ENCODE measurements at regions of chr10 and their contacts with region 1.

Region 1: DNA sequence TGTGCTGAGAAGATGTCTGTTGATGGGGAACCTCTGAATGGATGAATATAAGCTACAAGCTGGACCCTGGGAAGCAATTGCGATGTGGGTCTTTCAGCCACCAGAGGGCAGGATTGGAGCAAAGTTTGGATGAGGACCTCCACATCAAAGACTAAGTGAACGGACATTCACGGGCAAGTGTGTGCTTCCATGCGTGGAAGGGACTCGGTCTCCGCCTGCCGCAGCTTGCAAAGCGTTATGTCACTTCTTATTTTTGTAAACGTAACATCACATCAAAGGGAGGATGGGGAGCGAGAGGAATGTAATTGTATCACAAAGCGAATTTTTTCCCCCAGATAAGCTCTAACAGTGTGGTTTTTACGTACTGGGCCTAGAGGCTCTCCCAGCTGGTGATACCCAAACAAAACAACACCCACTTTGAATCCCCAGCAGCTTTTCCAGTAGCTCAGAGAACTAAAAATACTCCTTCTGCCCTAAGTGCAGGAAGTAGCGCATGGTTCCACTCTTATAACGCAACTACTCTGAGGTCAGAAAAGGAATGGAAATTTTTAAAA is 65.0 kb downstream of the VWA2 start:
- DNase-seq: peak; percentile 83
- ATAC-seq: peak; percentile 35
- H3K4me3 Mint-ChIP-seq: peak overlapping the region; percentile 74
- H3K27ac Mint-ChIP-seq: no peak overlapping the region
- H3K4me1 Mint-ChIP-seq: peaks cover 5% of the 10 kb centered on the region
- H3K27me3 Mint-ChIP-seq: 0 out of 2 replicates have a peak, but pooled peaks cover 3% of the 10 kb centered on the region
- CTCF ChIP-seq: peak; percentile 76

Region 2: GRCh38 chr10:114315566-114316420 is 11.7 kb after region 1 on chr10:
- CTCF ChIA-PET with region 1: interaction called, 12 read pairs
- POLR2A ChIA-PET with region 1: no interaction called
- DNase-seq: no peak
- ATAC-seq: no peak; the same call in 1 of the 2 replicates
- H3K4me3 Mint-ChIP-seq: no peak overlapping the region
- H3K27ac Mint-ChIP-seq: no peak overlapping the region
- H3K4me1 Mint-ChIP-seq: peaks cover 4% of the 10 kb centered on the region
- H3K27me3 Mint-ChIP-seq: no peaks in the 10 kb centered on the region
- CTCF ChIP-seq: no peak

Region 3: DNA sequence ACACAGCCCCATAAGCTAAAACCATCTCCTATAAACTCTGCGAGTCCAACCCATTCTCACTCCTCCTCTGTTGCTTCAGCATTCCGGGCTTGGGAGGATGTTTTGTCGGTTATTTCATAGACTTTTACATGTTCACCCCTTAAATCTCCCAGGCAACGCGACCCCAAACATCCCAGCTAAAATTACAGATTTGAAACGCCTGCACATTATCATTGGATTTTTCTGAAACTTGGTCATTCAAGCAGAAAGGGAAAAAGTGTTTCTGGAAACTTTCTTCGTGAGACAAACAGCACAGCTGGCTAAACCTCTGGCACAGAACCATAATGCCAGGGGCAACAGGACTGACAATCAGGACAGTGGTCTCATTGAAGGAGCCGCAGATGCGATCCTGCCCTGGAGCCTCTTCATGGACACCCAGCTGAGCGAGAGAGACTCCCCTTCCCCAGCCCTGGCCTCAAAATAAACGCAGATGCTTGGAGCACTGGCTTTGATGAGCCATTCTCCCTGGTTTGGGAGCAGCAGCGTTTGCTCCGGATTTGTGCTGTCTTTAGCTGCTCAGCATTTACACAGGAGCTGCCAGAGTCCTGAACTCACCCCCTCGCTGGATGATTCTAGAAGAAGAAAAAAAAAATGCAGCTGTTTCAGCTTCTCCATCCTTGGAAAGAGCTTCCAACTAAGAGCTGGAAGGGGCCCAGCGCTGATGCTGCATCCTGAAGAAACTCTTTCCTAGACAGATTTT is 70.1 kb after region 1 on chr10:
- CTCF ChIA-PET with region 1: interaction called, 25 read pairs
- POLR2A ChIA-PET with region 1: no interaction called
- DNase-seq: no peak
- ATAC-seq: peak; percentile 20; the same call in 1 of the 2 replicates
- H3K4me3 Mint-ChIP-seq: no peak overlapping the region
- H3K27ac Mint-ChIP-seq: peak overlapping the region; percentile 10; the same call in 1 of the 2 replicates
- H3K4me1 Mint-ChIP-seq: peaks cover 15% of the 10 kb centered on the region
- H3K27me3 Mint-ChIP-seq: no peaks in the 10 kb centered on the region
- CTCF ChIP-seq: no peak

Region 4: GRCh38 chr10:114432566-114433093 is 128.5 kb after region 1 on chr10:
- CTCF ChIA-PET with region 1: interaction called, 52 read pairs
- POLR2A ChIA-PET with region 1: interaction called, 3 read pairs
- DNase-seq: no peak
- ATAC-seq: no peak
- H3K4me3 Mint-ChIP-seq: no peak overlapping the region
- H3K27ac Mint-ChIP-seq: no peak overlapping the region
- H3K4me1 Mint-ChIP-seq: peaks cover 9% of the 10 kb centered on the region
- H3K27me3 Mint-ChIP-seq: no peaks in the 10 kb centered on the region
- CTCF ChIP-seq: no peak

Region 5: GRCh38 chr10:114470956-114471905 is 167.1 kb after region 1 on chr10:
- CTCF ChIA-PET with region 1: interaction called, 28 read pairs
- POLR2A ChIA-PET with region 1: no interaction called
- DNase-seq: peak; percentile 71
- ATAC-seq: peak; percentile 51
- H3K4me3 Mint-ChIP-seq: no peak overlapping the region
- H3K27ac Mint-ChIP-seq: no peak overlapping the region
- H3K4me1 Mint-ChIP-seq: peaks cover 26% of the 10 kb centered on the region
- H3K27me3 Mint-ChIP-seq: no peaks in the 10 kb centered on the region
- CTCF ChIP-seq: peak; percentile 77

Region 6: GRCh38 chr10:114550756-114551635 is 246.9 kb after region 1 on chr10:
- CTCF ChIA-PET with region 1: interaction called, 14 read pairs
- POLR2A ChIA-PET with region 1: no interaction called
- DNase-seq: no peak
- ATAC-seq: peak; percentile 65
- H3K4me3 Mint-ChIP-seq: no peak overlapping the region
- H3K27ac Mint-ChIP-seq: no peak overlapping the region
- H3K4me1 Mint-ChIP-seq: no peaks in the 10 kb centered on the region
- H3K27me3 Mint-ChIP-seq: no peaks in the 10 kb centered on the region
- CTCF ChIP-seq: peak; percentile 29; the same call in 1 of the 2 replicates

Region 7: GRCh38 chr10:114623661-114624294 is 319.7 kb after region 1 on chr10:
- CTCF ChIA-PET with region 1: no interaction called
- POLR2A ChIA-PET with region 1: no interaction called
- DNase-seq: no peak
- ATAC-seq: peak; percentile 85
- H3K4me3 Mint-ChIP-seq: no peak overlapping the region
- H3K27ac Mint-ChIP-seq: peak overlapping the region; percentile 86
- H3K4me1 Mint-ChIP-seq: peaks cover 25% of the 10 kb centered on the region
- H3K27me3 Mint-ChIP-seq: no peaks in the 10 kb centered on the region; the same call in 1 of the 2 replicates
- CTCF ChIP-seq: no peak